T-cell (primary cell): ENCODE measurements at regions of chr16 and their contacts with region 1.

Region 1: GRCh38 chr16:68072038-68072695 is 13.0 kb upstream of the NFATC3 start:
- DNase-seq: no peak
- ATAC-seq: no peak
- H3K4me3 ChIP-seq: no peak overlapping the region
- H3K4me3 Mint-ChIP-seq: no peak overlapping the region
- H3K27ac ChIP-seq: peak overlapping the region; percentile 72
- H3K27ac Mint-ChIP-seq: peak overlapping the region; percentile 44 to 90
- H3K4me1 ChIP-seq: peaks cover 45 to 89% of the 10 kb centered on the region in 2 experiments
- H3K4me1 Mint-ChIP-seq: peaks cover 78 to 88% (median 86%) of the 10 kb centered on the region in 3 donors
- H3K27me3 ChIP-seq: no peaks in the 10 kb centered on the region
- H3K27me3 Mint-ChIP-seq: no peaks in the 10 kb centered on the region

Region 2: GRCh38 chr16:67999985-68000384 is 72.2 kb before region 1 on chr16:
- CTCF ChIA-PET with region 1: no interaction called
- POLR2A ChIA-PET with region 1: interaction called in 1 of 2 experiments, 12 read pairs
- DNase-seq: peak in 2 of 35 experiments; percentile 14 to 15
- ATAC-seq: peak; percentile 3 to 35 (median 18)
- H3K4me3 ChIP-seq: peak overlapping the region; percentile 25 to 51
- H3K4me3 Mint-ChIP-seq: peak overlapping the region; percentile 81 to 90 (median 88)
- H3K27ac ChIP-seq: peak overlapping the region; percentile 72
- H3K27ac Mint-ChIP-seq: peak overlapping the region; percentile 96
- H3K4me1 ChIP-seq: peaks cover 18 to 72% of the 10 kb centered on the region in 2 experiments
- H3K4me1 Mint-ChIP-seq: peaks cover 40 to 71% (median 68%) of the 10 kb centered on the region in 3 donors
- H3K27me3 ChIP-seq: no peaks in the 10 kb centered on the region
- H3K27me3 Mint-ChIP-seq: no peaks in the 10 kb centered on the region

Region 3: GRCh38 chr16:68022704-68023522 is 49.3 kb before region 1 on chr16 and contains the starts of genes DDX28 and DUS2:
- CTCF ChIA-PET with region 1: no interaction called
- POLR2A ChIA-PET with region 1: interaction called in 1 of 2 experiments, 11 read pairs
- DNase-seq: peak; percentile 84 to 98 (median 92)
- ATAC-seq: peak; percentile 91 to 94 (median 92)
- H3K4me3 ChIP-seq: peak within 1 kb of the TSS; percentile 85 to 97
- H3K4me3 Mint-ChIP-seq: peak within 1 kb of the TSS; percentile 83 to 99 (median 93)
- H3K27ac ChIP-seq: peak within 1 kb of the TSS; percentile 64
- H3K27ac Mint-ChIP-seq: peak within 1 kb of the TSS; percentile 98 to 99
- H3K4me1 ChIP-seq: peaks cover 11 to 30% of the 10 kb centered on the region in 2 experiments
- H3K4me1 Mint-ChIP-seq: peaks cover 30 to 37% (median 34%) of the 10 kb centered on the region in 3 donors
- H3K27me3 ChIP-seq: no peaks in the 10 kb centered on the region
- H3K27me3 Mint-ChIP-seq: no peaks in the 10 kb centered on the region
- total RNA-seq, gene DDX28: 15.5 to 21.0 (median 17.6) TPM
- total RNA-seq, gene DUS2: 14.5 to 19.4 (median 15.8) TPM